ENCODE measurements at regions of chr15 and their contacts with region 1.

Region 1: DNA sequence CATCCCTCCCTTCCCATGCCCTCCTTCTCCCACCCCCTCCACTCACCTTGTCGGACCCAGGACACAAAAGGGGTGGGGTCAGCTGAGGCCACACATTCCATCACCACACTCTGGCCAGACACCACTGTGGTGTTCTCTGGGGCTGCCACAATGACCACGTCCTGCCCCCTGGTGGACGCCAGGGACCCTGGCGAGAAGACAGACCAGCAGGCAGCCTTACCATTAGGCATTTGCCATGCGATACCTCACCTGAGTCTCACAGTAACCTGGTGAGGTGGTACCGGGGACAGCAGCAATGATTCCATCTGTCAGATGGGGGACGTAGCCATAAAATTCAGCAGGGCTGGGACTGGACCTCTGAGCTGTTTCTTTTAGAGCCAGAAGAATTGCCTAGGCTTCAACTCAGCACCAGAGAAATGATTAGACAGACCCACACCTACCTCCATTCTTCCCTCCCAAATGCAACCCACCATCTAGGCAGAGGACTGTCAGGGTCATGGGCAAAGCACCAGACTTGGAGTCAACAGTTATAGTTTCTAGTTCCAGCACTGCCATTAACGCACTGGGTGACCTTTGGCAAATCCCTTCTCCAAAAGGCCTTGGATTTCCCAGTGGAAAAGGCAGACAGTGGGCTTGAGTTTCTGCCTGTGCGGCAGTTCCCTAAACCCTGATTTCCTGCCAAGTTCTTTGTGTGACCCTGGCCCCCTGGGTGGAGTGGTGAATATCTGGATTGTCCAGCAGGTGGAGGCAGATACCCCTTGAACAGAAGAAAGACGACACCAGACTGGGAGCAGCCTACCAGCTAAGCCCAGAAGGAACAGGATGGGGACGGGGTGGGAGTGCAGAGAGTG is 21.8 kb downstream of the IGDCC4 start:
- DNase-seq: peak; percentile 91

Region 2: GRCh38 chr15:65384895-65385858 is 15.8 kb before region 1 on chr15:
- CTCF ChIA-PET with region 1: interaction called, 21 read pairs
- POLR2A ChIA-PET with region 1: no interaction called
- DNase-seq: peak; percentile 92

Region 3: GRCh38 chr15:65414841-65415621 is 14.0 kb after region 1 on chr15:
- CTCF ChIA-PET with region 1: interaction called, 20 read pairs
- POLR2A ChIA-PET with region 1: interaction called, 8 read pairs
- DNase-seq: peak; percentile 75